K562 (cell line): ENCODE measurements at regions of chr9 and their contacts with region 1.

Region 1: GRCh38 chr9:84261082-84261746 is 79.3 kb downstream of the SLC28A3 start:
- DNase-seq: peak; percentile 55 to 74 (median 62)
- ATAC-seq: peak; percentile 97
- H3K4me3 ChIP-seq: no peak overlapping the region
- H3K27ac ChIP-seq: no peak overlapping the region
- H3K4me1 ChIP-seq: no peaks in the 10 kb centered on the region
- H3K27me3 ChIP-seq: peaks cover 0 to under 1% of the 10 kb centered on the region in 2 experiments; a peak in 1 of 5 replicates
- CTCF ChIP-seq: peak; percentile 70 to 79 (median 70)
- EP300 ChIP-seq: no peak
- POLR2A ChIP-seq: no peak
- RAD21 ChIP-seq: peak; percentile 83 to 88

Region 2: DNA sequence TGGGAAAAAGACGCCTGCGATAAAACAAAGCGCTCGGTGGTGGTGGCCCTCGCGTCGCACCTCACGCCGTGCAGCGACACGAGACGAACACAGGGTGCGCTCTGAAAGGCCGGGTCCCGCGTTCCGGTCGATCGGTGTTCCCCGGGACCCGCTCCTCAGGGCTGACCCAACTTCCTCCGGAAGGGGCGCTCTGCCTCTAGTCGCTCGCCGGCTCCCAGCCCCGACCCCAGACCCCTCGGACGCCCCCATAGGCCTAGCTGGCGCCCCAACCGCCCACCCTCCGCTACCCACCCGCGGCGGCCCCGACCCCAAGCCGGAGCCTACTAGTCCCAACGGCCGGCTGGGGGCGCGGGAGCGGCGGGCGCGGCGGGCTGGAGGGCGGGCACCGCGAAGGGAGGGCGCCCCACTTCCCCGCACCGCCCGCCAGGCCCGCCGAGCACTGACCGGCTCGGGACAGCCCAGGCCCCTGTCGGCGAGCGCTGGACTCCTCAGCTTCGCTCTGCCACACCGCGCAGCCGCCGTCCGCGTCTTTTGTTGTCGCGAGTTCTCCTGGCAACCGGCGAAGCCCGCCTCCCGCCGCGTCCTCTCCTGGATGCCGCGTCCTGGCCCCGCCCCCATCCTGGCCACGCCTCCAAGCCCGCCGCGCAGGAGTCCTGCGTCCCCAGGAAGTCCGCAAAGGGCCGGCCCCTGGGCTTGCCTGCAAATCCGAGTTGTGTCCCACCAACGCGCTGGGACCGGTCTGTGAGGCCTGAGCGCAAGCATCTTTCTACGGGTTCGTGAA is 340.1 kb before region 1 on chr9 and contains the start of gene KIF27:
- CTCF ChIA-PET with region 1: interaction called, 4 read pairs
- POLR2A ChIA-PET with region 1: no interaction called
- in situ Hi-C with region 1: no loop called
- intact Hi-C with region 1: loop called (anchors 1 kb)
- DNase-seq: peak; percentile 89 to 95 (median 90)
- ATAC-seq: peak; percentile 97
- H3K4me3 ChIP-seq: peak within 1 kb of the TSS; percentile 61
- H3K27ac ChIP-seq: peak within 1 kb of the TSS; percentile 81; the same call in 2 of the 3 replicates
- H3K4me1 ChIP-seq: peaks cover 0 to 6% of the 10 kb centered on the region in 2 experiments; a peak in 3 of 5 replicates
- H3K27me3 ChIP-seq: no peaks in the 10 kb centered on the region
- CTCF ChIP-seq: peak; percentile 9 to 62 (median 31); a peak in 3 of 6 replicates
- EP300 ChIP-seq: no peak
- POLR2A ChIP-seq: peak; percentile 65
- RAD21 ChIP-seq: no peak
- polyA plus RNA-seq, gene KIF27: 0.32 to 0.50 TPM

Region 3: GRCh38 chr9:83937911-83938323 is 323.3 kb before region 1 on chr9:
- CTCF ChIA-PET with region 1: interaction called, 34 read pairs
- POLR2A ChIA-PET with region 1: interaction called, 3 read pairs
- in situ Hi-C with region 1: loop called (anchors 5 kb)
- intact Hi-C with region 1: loop called (anchors 1 kb)
- DNase-seq: peak; percentile 41 to 63 (median 52)
- ATAC-seq: peak; percentile 84
- H3K4me3 ChIP-seq: no peak overlapping the region
- H3K27ac ChIP-seq: no peak overlapping the region
- H3K4me1 ChIP-seq: no peaks in the 10 kb centered on the region
- H3K27me3 ChIP-seq: no peaks in the 10 kb centered on the region
- CTCF ChIP-seq: peak; percentile 43 to 67 (median 57); a peak in 5 of 6 replicates
- EP300 ChIP-seq: no peak
- POLR2A ChIP-seq: no peak
- RAD21 ChIP-seq: peak; percentile 61 to 67

Region 4: GRCh38 chr9:84891924-84892323 is 630.7 kb after region 1 on chr9:
- CTCF ChIA-PET with region 1: no interaction called
- POLR2A ChIA-PET with region 1: no interaction called
- in situ Hi-C with region 1: no loop called
- intact Hi-C with region 1: no loop called
- DNase-seq: no peak
- ATAC-seq: no peak
- H3K4me3 ChIP-seq: no peak overlapping the region
- H3K27ac ChIP-seq: no peak overlapping the region
- H3K4me1 ChIP-seq: no peaks in the 10 kb centered on the region
- H3K27me3 ChIP-seq: no peaks in the 10 kb centered on the region
- CTCF ChIP-seq: no peak
- EP300 ChIP-seq: no peak
- POLR2A ChIP-seq: no peak
- RAD21 ChIP-seq: no peak